AG04450 (cell line): ENCODE measurements at regions of chr3 and their contacts with region 1.

Region 1: GRCh38 chr3:192816351-192816750 is 89.0 kb upstream of the FGF12 start:
- DNase-seq: no peak
- H3K4me3 ChIP-seq: no peak overlapping the region
- H3K27ac ChIP-seq: no peak overlapping the region
- H3K27me3 ChIP-seq: no peaks in the 10 kb centered on the region
- CTCF ChIP-seq: peak; percentile 70

Region 2: DNA sequence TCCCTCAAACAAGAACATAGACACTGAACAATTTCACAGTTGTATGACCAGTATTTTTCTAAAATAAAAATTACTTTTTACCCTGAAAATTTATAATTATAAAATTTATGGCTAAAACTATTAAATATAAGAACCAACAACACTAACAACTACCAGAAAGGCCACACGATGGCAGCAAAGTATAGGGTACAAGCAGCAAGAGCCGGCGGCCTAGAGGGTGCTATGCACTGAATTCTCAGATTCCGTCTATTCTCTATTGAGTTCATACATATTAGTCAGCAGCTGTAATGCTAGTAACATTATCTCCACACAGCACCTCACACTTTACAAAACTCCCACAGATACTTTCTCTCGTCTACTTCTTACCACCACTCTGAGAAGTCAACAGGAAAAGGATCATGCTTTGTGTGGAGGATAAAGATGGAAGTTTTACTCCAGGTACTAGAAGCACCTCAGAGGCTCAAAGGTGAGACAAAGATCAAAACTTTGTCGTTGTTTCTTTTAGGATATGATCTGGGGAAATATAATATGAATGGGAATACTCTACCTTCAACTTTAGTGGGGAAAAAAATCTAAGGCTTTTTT is 249.6 kb before region 1 on chr3:
- CTCF ChIA-PET with region 1: interaction called, 11 read pairs
- POLR2A ChIA-PET with region 1: no interaction called
- DNase-seq: peak; percentile 73
- H3K4me3 ChIP-seq: no peak overlapping the region
- H3K27ac ChIP-seq: no peak overlapping the region
- H3K27me3 ChIP-seq: peaks cover 2% of the 10 kb centered on the region
- CTCF ChIP-seq: peak; percentile 79

Region 3: DNA sequence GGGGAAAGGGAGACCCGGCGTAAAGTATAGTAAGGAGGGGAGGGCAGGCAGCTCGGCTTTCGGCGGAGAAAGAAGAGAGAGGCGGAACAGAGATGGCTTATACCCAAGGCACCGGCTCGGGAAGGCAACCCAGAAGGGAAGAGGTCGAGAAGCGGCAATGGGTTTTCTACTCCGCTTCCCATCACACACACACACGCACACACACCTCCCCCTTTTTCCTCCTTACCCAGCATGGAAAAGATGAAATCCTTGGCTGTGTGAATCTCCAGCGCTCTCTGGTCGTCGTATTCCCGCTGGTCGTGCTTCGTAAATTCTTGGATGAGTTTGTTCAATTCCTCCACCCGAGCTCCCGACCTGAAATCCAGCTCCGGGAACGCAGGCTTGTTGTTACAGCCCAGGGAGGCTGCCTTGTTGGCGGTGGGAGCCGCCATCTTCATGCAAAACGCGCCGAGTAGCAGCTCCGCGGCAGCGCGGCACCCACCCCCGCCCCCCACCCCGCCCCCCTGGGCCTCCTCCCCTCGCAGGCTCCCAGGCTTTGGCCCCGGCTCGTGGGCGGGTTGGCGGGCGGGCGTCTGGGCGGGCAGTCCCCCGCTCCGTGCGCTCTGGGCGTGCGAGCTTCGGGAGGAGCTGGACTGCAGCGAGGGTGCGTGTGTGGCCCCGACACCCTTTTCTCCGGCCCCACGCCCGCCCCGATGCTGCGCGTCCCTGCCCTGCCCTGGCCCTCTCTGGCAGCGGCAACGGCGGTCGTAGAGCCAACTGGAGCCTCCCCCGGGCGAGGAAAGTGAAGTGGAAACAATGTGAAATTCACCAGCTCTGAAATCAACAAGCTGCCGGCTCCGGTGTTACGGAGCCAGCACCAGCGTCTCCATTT is 101.3 kb after region 1 on chr3 and contains the start of gene MB21D2:
- CTCF ChIA-PET with region 1: interaction called, 21 read pairs
- POLR2A ChIA-PET with region 1: interaction called, 8 read pairs
- DNase-seq: peak; percentile 37
- H3K4me3 ChIP-seq: peak within 1 kb of the TSS; percentile 91
- H3K27ac ChIP-seq: peak within 1 kb of the TSS; percentile 96
- H3K27me3 ChIP-seq: no peaks in the 10 kb centered on the region
- CTCF ChIP-seq: no peak
- polyA plus RNA-seq, gene MB21D2: 14.1 and 14.6 TPM in 2 replicates

Region 4: GRCh38 chr3:193023218-193023617 is 206.9 kb after region 1 on chr3:
- CTCF ChIA-PET with region 1: interaction called, 16 read pairs
- POLR2A ChIA-PET with region 1: no interaction called
- DNase-seq: no peak
- H3K4me3 ChIP-seq: no peak overlapping the region
- H3K27ac ChIP-seq: no peak overlapping the region
- H3K27me3 ChIP-seq: no peaks in the 10 kb centered on the region
- CTCF ChIP-seq: no peak

Region 5: DNA sequence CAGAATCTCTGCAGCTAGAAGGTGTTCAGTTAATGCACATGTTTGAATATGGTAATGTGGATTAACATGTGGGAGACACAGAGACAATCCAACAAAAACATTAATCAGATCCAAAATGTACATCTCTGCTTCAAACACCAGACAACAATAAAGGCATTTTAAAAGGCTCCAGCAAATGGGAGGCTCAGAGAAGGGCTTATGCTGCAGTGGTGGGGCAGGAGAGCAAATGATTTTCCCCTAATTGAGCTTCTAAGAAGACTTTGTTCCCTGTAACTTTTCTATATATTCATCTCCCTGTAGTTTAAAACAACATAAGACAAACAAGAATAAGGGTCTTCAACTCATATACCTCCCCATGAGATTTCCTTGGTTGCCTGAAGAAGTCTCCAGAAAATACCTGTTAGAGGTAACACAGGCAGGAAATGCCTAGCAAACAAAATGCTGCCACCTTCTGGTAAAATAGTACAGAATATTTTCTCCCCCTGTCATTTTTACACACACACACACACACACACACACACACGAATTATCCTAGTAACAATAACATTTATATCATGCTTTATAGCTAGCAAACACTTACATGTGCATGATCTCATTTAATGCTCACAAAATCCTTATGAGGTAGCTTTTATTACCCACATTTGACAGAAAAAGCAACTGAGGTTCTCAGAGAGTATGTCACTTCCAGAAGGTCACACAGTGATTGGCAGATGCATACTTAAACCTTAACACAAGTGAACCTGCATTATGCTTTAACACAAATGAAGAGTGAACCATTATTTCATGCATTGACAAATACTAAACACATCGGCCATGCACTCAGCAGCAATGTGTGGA is 224.7 kb after region 1 on chr3:
- CTCF ChIA-PET with region 1: interaction called, 637 read pairs
- POLR2A ChIA-PET with region 1: no interaction called
- DNase-seq: peak; percentile 13
- H3K4me3 ChIP-seq: no peak overlapping the region
- H3K27ac ChIP-seq: no peak overlapping the region
- H3K27me3 ChIP-seq: peaks cover 4% of the 10 kb centered on the region
- CTCF ChIP-seq: peak; percentile 59

Region 6: DNA sequence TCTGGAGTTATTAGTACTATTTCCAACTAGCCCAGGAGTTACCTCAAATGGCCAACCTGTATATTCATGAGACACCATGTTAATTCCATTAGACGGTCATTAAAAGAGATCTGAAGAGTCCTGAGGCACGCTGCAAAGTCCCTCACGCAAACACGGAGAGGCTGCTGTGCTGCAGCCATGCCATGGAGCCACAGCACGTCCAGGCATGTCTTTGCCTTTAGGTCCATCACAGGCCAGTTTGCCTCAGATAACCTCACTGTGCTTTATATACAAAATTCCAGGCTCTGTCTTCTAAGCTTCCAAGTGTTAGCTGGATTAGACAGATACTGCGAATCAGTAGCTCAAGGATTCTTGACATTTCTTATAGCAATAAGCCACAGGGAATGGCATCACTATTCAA is 414.9 kb after region 1 on chr3:
- CTCF ChIA-PET with region 1: interaction called, 10 read pairs
- POLR2A ChIA-PET with region 1: no interaction called
- DNase-seq: no peak
- H3K4me3 ChIP-seq: no peak overlapping the region
- H3K27ac ChIP-seq: no peak overlapping the region
- H3K27me3 ChIP-seq: no peaks in the 10 kb centered on the region
- CTCF ChIP-seq: no peak

Region 7: GRCh38 chr3:193572426-193572908 is 756.1 kb after region 1 on chr3:
- CTCF ChIA-PET with region 1: interaction called, 46 read pairs
- POLR2A ChIA-PET with region 1: no interaction called
- DNase-seq: peak; percentile 13
- H3K4me3 ChIP-seq: no peak overlapping the region
- H3K27ac ChIP-seq: no peak overlapping the region
- H3K27me3 ChIP-seq: peaks cover 6% of the 10 kb centered on the region
- CTCF ChIP-seq: peak; percentile 85